CD8-positive, alpha-beta T cell (primary cell): ENCODE measurements at regions of chr6 and their contacts with region 1.

Region 1: DNA sequence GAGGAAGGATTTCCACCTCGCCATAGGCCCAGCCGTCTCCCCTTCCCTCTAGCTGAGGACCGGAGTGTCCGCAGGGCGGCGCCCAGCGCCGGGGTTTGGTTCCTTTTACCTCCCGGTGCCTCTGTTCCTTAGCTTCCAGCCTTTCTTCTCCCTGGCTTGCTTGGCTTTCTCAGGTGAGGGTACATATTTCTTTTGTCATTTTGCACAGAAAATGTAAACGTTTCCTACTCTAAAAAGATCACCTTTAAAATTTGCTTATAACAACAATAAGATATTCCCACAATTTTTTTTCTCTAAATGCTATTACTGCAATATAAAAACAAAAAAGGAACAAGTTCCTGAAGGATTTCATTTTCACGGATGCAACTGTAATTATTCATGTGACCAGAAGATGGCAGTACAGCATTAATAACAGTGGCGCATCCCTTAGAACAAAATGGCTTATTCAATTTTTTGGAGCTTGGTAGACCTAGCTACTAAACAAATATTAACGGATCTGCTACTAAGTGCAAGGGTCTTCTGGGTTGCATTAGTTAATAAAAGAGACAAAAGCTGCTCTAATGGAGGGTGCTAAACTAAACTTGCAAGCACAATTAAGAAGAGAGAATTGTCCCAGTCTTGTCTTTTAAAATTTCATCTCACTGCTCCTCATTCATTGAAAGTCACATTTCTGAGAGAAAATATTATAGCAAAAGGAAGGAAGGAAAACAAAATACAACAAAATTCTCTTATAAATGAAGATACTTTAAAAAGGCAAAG is 172.9 kb downstream of the ADGRG6 start:
- DNase-seq: peak in 2 of 9 experiments; percentile 51 to 64
- ATAC-seq: peak; percentile 51
- H3K4me3 ChIP-seq: no peak overlapping the region
- H3K4me3 Mint-ChIP-seq: no peak overlapping the region
- H3K27ac ChIP-seq: no peak overlapping the region
- H3K27ac Mint-ChIP-seq: no peak overlapping the region
- H3K4me1 ChIP-seq: no peaks in the 10 kb centered on the region
- H3K4me1 Mint-ChIP-seq: peaks cover 1% of the 10 kb centered on the region
- H3K27me3 ChIP-seq: no peaks in the 10 kb centered on the region
- H3K27me3 Mint-ChIP-seq: no peaks in the 10 kb centered on the region
- CTCF ChIP-seq: peak; percentile 98

Region 2: DNA sequence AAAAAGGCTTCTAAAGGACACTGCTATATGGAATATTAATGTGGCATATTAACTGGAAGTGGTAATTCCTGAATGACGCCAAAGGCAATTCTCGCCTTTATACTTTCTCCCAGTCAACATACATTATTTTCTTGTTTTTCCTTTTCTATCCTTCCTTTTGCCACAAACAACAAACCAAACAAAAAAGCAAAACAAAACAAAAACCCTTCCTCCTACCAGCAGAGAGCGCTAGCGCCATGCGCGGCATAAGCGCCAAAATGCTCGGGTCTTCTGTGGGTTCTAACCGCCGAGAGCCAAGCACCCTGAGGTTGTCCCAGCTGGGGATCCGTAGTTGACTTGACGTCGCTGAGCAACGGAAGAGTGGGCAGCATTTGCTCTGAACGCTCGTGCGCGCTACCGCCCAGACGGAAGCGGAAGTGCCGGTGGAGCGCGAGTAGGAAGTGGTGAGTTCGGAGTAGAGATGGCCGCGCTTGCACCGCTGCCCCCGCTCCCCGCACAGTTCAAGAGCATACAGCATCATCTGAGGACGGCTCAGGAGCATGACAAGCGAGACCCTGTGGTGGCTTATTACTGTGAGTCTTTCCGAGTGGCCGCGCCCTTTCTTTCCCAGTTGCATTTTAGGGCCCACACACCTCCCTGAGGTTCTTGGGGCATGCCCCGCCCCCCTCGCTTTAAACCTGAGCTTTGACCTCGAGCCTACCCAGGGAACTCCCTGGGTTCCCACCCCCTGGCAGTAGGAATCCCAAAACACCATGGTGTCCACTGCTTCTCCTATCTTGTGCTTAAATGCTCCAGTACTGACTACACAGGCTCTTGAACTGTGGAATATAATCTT is 327.7 kb before region 1 on chr6 and contains the starts of genes NMBR and VTA1:
- CTCF ChIA-PET with region 1: no interaction called
- POLR2A ChIA-PET with region 1: no interaction called
- intact Hi-C with region 1: loop called in 1 of 2 experiments (anchors 5 kb)
- DNase-seq: peak; percentile 89 to 100 (median 95)
- ATAC-seq: peak; percentile 95
- H3K4me3 ChIP-seq: peak within 1 kb of the TSS; percentile 93 to 100
- H3K4me3 Mint-ChIP-seq: peak within 1 kb of the TSS; percentile 91
- H3K27ac ChIP-seq: peak within 1 kb of the TSS; percentile 79 to 82
- H3K27ac Mint-ChIP-seq: peak within 1 kb of the TSS; percentile 87
- H3K4me1 ChIP-seq: peaks cover 31% of the 10 kb centered on the region
- H3K4me1 Mint-ChIP-seq: peaks cover 64% of the 10 kb centered on the region
- H3K27me3 ChIP-seq: no peaks in the 10 kb centered on the region
- H3K27me3 Mint-ChIP-seq: no peaks in the 10 kb centered on the region
- CTCF ChIP-seq: peak; percentile 87
- total RNA-seq, gene NMBR: not detected
- total RNA-seq, gene VTA1: 20.7 to 24.6 TPM

Region 3: DNA sequence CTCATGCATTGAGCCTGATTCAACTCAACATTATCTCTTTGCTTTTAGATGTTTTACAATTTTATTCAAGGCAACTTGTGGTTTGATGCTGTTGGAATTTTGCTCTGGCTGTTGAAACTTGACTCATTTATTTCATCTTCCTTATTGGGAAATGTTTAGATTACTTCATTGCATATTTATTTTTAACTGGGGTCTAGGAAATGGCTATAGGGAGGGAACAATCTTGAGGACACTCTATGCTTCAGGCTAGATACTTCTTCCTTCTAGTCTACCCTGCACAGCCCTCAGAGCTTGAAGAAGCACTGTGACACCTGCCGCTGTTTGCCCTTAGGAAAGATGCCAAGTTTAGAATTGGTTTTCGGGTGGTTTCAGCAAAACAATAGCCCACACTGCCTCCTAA is 10.5 kb after region 1 on chr6:
- CTCF ChIA-PET with region 1: interaction called, 23 read pairs
- POLR2A ChIA-PET with region 1: no interaction called
- intact Hi-C with region 1: no loop called
- DNase-seq: no peak
- ATAC-seq: no peak
- H3K4me3 ChIP-seq: no peak overlapping the region
- H3K4me3 Mint-ChIP-seq: no peak overlapping the region
- H3K27ac ChIP-seq: no peak overlapping the region
- H3K27ac Mint-ChIP-seq: no peak overlapping the region
- H3K4me1 ChIP-seq: no peaks in the 10 kb centered on the region
- H3K4me1 Mint-ChIP-seq: no peaks in the 10 kb centered on the region
- H3K27me3 ChIP-seq: peaks cover 0 to 3% of the 10 kb centered on the region in 2 experiments
- H3K27me3 Mint-ChIP-seq: no peaks in the 10 kb centered on the region
- CTCF ChIP-seq: no peak

Region 4: GRCh38 chr6:142692942-142693341 is 218.2 kb after region 1 on chr6:
- CTCF ChIA-PET with region 1: interaction called, 23 read pairs
- POLR2A ChIA-PET with region 1: no interaction called
- intact Hi-C with region 1: loop called (anchors 2 to 5 kb)
- DNase-seq: peak; percentile 47 to 82 (median 71)
- ATAC-seq: peak; percentile 88
- H3K4me3 ChIP-seq: no peak overlapping the region
- H3K4me3 Mint-ChIP-seq: no peak overlapping the region
- H3K27ac ChIP-seq: no peak overlapping the region
- H3K27ac Mint-ChIP-seq: no peak overlapping the region
- H3K4me1 ChIP-seq: peaks cover 4% of the 10 kb centered on the region
- H3K4me1 Mint-ChIP-seq: peaks cover 6% of the 10 kb centered on the region
- H3K27me3 ChIP-seq: no peaks in the 10 kb centered on the region
- H3K27me3 Mint-ChIP-seq: no peaks in the 10 kb centered on the region
- CTCF ChIP-seq: peak; percentile 90

Region 5: DNA sequence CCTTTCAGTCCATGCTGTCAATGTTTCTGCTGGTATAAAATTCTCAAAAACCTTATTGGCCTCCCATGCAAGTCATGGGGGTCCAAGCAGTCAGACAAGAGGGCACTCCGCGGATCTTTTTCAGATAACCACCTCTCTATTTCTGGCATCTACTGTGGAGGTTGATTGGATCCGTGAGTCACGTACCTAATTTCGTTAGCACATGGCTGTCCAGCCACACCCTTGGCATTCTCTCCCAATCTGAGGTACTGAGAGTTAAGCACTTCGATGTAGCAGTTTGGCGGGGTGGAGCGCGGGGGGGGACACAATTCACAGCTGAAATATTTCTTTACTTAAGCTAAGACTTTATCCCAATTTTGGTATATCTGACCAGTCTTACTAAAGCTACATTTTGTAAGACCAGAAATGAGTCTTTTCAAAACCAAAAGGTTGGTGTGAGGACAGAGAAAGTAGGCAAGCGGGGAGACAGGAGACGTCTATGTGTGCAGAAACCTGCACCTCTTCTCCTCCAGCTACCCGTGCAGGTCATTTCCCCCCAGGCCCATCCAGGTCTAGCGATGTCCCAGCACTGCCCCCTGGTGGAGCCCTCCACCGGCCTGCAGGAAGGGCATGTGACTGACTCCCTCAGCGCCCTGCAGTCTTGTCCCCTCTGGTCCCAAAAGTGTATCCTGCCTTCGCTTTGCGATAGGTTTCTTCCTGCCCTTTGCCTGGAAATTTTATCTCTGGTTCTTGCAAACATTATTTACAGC is 862.7 kb after region 1 on chr6:
- CTCF ChIA-PET with region 1: interaction called, 4 read pairs
- POLR2A ChIA-PET with region 1: no interaction called
- intact Hi-C with region 1: loop called in 1 of 2 experiments (anchors 5 kb)
- DNase-seq: peak in 8 of 9 experiments; percentile 20 to 70 (median 42)
- ATAC-seq: no peak
- H3K4me3 ChIP-seq: no peak overlapping the region
- H3K4me3 Mint-ChIP-seq: no peak overlapping the region
- H3K27ac ChIP-seq: no peak overlapping the region
- H3K27ac Mint-ChIP-seq: no peak overlapping the region
- H3K4me1 ChIP-seq: no peaks in the 10 kb centered on the region
- H3K4me1 Mint-ChIP-seq: no peaks in the 10 kb centered on the region
- H3K27me3 ChIP-seq: no peaks in the 10 kb centered on the region
- H3K27me3 Mint-ChIP-seq: no peaks in the 10 kb centered on the region
- CTCF ChIP-seq: peak; percentile 36

Region 6: GRCh38 chr6:143940011-143940597 is 1465.4 kb after region 1 on chr6:
- CTCF ChIA-PET with region 1: no interaction called
- POLR2A ChIA-PET with region 1: no interaction called
- intact Hi-C with region 1: loop called in 1 of 2 experiments (anchors 5 kb)
- DNase-seq: peak; percentile 7 to 76 (median 51)
- ATAC-seq: peak; percentile 94
- H3K4me3 ChIP-seq: no peak overlapping the region
- H3K4me3 Mint-ChIP-seq: no peak overlapping the region
- H3K27ac ChIP-seq: no peak overlapping the region
- H3K27ac Mint-ChIP-seq: no peak overlapping the region
- H3K4me1 ChIP-seq: peaks cover 5% of the 10 kb centered on the region
- H3K4me1 Mint-ChIP-seq: peaks cover 13% of the 10 kb centered on the region
- H3K27me3 ChIP-seq: no peaks in the 10 kb centered on the region
- H3K27me3 Mint-ChIP-seq: no peaks in the 10 kb centered on the region
- CTCF ChIP-seq: peak; percentile 93